ENCODE measurements at regions of chr7 and their contacts with region 1.

Region 1: DNA sequence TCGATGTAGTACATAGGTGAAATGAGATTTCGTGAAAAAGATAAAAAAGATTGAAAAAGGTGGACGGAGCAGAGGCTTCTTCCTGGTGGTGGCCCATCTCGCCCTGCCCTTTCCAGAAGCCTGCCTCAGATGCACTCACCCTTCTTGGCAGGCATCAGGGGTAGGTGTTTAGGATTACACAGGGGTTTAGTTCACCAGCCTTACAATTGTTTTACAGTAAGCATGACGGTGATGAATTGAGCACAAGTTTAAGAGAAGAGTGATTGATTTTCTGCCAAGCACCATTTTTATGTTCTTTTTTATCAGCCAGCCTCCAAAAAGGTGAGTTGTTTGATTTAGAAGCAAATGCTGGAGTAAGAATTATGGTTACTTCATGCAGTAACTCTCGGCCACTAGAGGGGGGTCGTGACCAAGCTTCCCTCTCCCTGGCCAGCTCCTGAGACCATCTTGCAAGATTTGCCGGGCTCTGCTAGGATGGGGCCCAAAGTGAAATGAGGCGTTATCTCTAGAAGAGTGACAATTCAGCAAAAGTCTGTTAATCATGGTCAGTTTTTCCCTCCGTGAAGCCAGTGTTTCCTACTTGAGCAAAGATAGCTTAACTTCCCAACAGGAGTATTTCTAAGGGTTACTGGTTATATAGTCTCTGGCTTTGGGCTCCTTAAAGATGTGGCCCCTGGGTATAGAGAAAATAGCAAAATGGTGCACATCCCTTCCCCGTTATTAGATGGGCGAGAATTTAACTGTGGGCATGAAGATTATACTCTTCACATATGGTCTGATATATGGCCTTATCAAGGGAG is 228.8 kb downstream of the BMPER start:
- DNase-seq: peak; percentile 23
- H3K4me3 ChIP-seq: no peak overlapping the region
- H3K27me3 ChIP-seq: no peaks in the 10 kb centered on the region
- CTCF ChIP-seq: peak; percentile 86

Region 2: GRCh38 chr7:33904681-33905388 is 229.3 kb before region 1 on chr7:
- CTCF ChIA-PET with region 1: no interaction called
- POLR2A ChIA-PET with region 1: interaction called, 15 read pairs
- DNase-seq: no peak
- H3K4me3 ChIP-seq: peak overlapping the region; percentile 57
- H3K27me3 ChIP-seq: no peaks in the 10 kb centered on the region
- CTCF ChIP-seq: no peak; the same call in none of the 2 replicates

Region 3: GRCh38 chr7:34123316-34123715 is 10.9 kb before region 1 on chr7:
- CTCF ChIA-PET with region 1: interaction called, 11 read pairs
- POLR2A ChIA-PET with region 1: no interaction called
- DNase-seq: no peak
- H3K4me3 ChIP-seq: no peak overlapping the region
- H3K27me3 ChIP-seq: no peaks in the 10 kb centered on the region
- CTCF ChIP-seq: no peak

Region 4: DNA sequence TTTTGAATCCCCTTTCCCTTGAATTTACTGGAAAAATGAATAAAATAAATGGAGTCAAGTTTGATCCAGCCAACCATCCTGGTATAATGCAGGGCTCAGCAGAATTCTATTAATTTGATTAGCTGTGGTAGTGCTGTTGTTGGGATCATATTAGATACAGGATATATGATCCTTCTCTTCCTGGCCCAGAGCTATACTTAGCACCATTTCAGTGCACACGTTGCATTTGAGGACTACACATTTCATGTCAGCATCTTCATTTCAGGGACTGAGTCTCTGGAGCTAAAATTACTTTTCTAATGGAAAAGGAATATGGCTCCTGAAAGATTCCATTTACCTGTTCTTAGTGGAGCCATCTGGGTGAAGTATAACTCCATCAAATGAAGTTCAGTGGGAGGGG is 11.4 kb after region 1 on chr7:
- CTCF ChIA-PET with region 1: interaction called, 11 read pairs
- POLR2A ChIA-PET with region 1: no interaction called
- DNase-seq: no peak
- H3K4me3 ChIP-seq: no peak overlapping the region
- H3K27me3 ChIP-seq: no peaks in the 10 kb centered on the region
- CTCF ChIP-seq: no peak

Region 5: DNA sequence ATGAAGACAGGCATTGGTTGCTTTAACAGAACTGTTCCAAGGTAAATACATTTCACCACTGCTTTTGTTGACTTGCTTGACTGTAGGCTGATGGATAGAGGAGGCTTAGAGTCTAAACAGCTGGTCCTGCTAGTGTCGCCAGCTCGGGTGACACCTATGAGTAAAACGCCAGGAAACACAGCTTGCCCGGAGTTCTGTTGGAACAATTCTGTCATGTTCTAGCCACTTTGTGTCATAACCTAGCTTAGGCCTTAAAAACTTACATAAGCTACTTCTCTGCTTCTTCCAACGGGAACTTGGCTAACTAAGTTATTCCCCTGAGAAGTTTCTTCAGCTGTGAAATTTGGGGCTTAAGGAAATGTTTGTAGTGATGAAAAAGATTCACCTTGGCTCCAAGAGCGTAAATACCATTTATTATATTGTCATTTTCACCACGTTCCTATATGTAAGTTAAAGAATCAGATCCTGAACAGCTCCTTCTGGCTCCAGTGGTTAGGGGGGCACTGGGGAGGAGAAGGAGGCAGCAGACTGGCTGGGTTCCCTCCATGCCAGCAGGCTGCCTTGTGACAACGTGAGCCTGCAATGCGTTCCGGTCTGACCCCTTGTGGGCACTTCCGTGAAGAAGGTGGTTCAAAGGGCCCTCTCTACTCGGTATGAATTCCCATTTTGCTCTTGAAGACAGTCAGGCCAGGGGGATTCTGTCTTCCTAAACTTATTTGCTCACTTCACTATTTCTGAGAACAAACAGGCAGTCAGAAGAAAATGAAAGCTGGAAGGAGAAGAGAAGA is 24.4 kb after region 1 on chr7:
- CTCF ChIA-PET with region 1: interaction called, 33 read pairs
- POLR2A ChIA-PET with region 1: no interaction called
- DNase-seq: no peak
- H3K4me3 ChIP-seq: no peak overlapping the region
- H3K27me3 ChIP-seq: no peaks in the 10 kb centered on the region
- CTCF ChIP-seq: no peak

Region 6: DNA sequence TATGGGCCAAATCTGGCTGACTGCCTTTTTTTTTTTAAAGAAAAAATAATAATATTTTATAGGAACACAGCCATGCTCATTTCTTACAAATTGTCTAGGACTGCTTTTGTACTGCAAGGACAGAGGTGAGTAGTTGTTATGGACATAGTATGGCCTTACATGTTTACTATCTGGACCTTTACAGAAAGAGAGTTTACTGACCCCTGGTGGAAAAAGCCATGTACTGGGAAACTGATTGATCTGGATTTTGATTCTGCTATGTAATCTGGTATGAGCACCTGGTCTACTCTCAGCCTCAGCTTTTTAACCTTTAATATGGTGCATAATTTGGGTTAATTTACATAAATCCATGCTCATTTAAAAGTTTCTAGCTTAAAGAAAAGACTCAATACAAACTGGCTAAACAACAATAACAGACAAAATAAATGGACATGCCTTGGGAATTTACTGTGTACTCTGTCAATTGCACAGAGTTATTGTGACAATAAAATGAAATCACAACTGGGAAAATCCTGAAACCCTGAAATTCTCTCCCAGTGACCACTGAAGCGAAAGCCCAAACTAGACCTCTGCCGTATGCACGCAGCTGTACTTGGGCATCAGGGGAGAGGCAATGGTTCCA is 31.9 kb after region 1 on chr7:
- CTCF ChIA-PET with region 1: interaction called, 15 read pairs
- POLR2A ChIA-PET with region 1: no interaction called
- DNase-seq: no peak
- H3K4me3 ChIP-seq: no peak overlapping the region
- H3K27me3 ChIP-seq: no peaks in the 10 kb centered on the region
- CTCF ChIP-seq: peak; percentile 72

Region 7: GRCh38 chr7:34330308-34330707 is 196.1 kb after region 1 on chr7:
- CTCF ChIA-PET with region 1: no interaction called
- POLR2A ChIA-PET with region 1: no interaction called
- DNase-seq: no peak
- H3K4me3 ChIP-seq: no peak overlapping the region
- H3K27me3 ChIP-seq: no peaks in the 10 kb centered on the region
- CTCF ChIP-seq: no peak